PC-9 (cell line): ENCODE measurements at regions of chrX and their contacts with region 1.

Region 1: DNA sequence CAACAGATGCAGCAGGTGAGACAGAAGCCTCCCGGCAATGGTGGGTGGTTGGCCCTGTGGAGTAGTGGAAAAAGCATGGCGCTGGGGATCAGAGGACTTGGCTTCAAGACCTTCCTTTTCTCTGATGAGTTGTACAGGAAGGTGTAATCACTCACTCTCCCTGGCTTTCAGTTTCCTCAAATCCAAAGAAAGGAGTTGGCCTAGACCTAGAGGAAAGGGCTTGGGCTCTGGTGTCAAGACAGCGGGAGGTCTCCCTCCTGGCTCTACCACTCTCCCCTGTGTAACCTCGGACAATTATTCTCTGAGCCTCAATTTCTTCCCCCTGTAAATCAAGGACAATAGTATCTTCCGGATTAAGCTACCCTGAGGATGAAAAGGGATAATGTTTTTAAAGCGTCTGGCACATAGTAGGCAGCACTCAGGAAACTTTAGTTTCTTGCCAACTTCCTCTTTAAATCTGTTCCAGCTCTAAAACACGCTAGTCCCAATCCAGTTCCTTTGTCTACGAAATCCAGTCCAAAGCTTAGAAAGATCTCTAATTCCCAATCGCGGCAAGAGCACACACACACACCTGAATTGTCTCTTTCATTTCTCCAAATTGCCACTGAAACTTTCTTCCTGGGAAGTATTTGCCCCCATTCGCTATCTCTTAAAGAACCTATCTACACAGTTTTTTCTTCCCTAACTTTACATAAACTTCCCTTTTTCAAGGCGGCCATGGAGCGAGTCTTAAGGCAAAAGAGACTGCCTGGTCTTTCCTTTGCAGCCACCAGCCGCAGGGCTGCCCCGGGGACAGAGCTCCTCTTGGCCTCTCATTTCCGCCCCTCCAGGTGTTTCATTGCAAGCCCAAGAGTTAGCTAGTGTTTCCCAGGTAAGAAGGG is 29.9 kb upstream of the GPC4 start:
- DNase-seq: peak; percentile 41 to 43
- H3K4me3 ChIP-seq: peak overlapping the region; percentile 54; the same call in 1 of the 2 replicates
- H3K27ac ChIP-seq: no peak overlapping the region
- H3K4me1 ChIP-seq: no peaks in the 10 kb centered on the region
- H3K27me3 ChIP-seq: no peaks in the 10 kb centered on the region
- CTCF ChIP-seq: no peak

Region 2: GRCh38 chrX:133235830-133236229 is 209.4 kb before region 1 on chrX:
- CTCF ChIA-PET with region 1: interaction called, 12 read pairs
- POLR2A ChIA-PET with region 1: no interaction called
- intact Hi-C with region 1: no loop called
- DNase-seq: no peak
- H3K4me3 ChIP-seq: no peak overlapping the region
- H3K27ac ChIP-seq: no peak overlapping the region
- H3K4me1 ChIP-seq: no peaks in the 10 kb centered on the region
- H3K27me3 ChIP-seq: no peaks in the 10 kb centered on the region
- CTCF ChIP-seq: no peak